Sigmoid colon (tissue), 7 donors: ENCODE measurements at regions of chr2 and their contacts with region 1.

Region 1: DNA sequence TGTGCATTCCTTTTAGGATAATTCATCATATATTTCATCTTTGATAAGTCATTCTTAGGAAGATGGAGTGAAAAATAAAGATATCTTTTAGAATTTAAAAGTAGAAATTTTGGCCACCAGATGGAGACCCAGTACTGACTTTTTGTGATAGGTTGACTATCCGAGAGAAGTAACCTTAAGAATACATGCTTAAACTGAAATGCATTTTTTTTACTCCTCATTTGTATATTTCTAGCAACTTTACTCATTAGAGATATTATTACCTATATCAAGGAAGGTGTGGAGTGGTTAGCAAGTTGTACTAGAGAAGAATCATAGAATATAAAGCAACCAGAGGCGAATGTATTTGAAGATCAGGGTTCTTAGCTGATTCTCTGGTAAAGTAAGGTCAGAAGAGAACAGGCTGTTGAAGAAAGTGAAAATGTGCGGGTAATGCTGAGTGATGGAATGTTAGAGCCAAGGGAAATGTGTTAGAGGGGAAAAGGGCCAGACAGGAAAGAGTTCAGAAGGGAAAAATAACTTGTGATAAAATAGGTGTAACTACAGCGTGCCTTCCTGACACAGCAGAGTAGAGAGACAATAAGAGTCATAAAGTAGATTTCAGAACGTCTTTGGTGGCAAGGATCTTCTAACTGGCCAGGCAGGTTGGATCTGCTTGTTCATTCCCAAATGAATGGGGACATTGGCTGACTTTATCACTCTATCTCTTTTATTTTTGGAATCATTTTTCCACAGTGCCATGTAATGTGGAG is 52.3 kb downstream of the TDRD15 start:
- DNase-seq: no peak
- H3K4me3 ChIP-seq: no peak overlapping the region
- H3K27ac ChIP-seq: no peak overlapping the region
- H3K4me1 ChIP-seq: peaks cover 0 to 6% (median 2%) of the 10 kb centered on the region in 4 donors
- H3K27me3 ChIP-seq: no peaks in the 10 kb centered on the region
- CTCF ChIP-seq: peak in 3 of 4 experiments; percentile 20 to 31 (median 22)
- EP300 ChIP-seq: no peak
- POLR2A ChIP-seq: no peak

Region 2: DNA sequence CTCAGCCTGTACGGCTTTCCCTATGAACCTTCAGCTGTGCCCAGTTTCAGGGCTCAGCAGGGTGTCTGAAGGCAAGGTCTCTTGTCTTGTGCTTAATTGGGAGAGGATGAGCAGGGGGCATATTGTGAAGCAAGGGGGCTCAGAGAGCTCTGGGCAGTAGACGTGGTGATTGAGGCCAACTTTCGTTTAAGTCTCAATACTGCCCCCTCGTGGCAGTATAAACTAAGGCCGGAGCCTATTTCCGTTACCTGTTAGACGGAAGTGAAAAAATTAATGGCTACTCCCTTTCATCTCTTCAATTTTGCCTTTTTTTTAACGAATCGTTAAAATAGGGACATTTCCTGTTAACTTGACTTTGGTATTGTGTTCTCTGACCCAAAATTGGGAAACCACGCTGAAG is 141.1 kb after region 1 on chr2:
- intact Hi-C with region 1: loop called (anchors 5 kb)
- DNase-seq: peak; percentile 64
- H3K4me3 ChIP-seq: no peak overlapping the region
- H3K27ac ChIP-seq: no peak overlapping the region
- H3K4me1 ChIP-seq: peaks cover 0 to 5% (median 0%) of the 10 kb centered on the region in 4 donors
- H3K27me3 ChIP-seq: no peaks in the 10 kb centered on the region
- CTCF ChIP-seq: peak in 3 of 4 experiments; percentile 47 to 65 (median 50)
- EP300 ChIP-seq: no peak
- POLR2A ChIP-seq: no peak